Activated CD4-positive, alpha-beta T cell treated with anti-CD3 and anti-CD28 coated beads, Interleukin-2, amount 10 ng/mL, durations not matched to agents 24 days and 14 days (primary cell): ENCODE measurements at regions of chr5 and their contacts with region 1.

Region 1: DNA sequence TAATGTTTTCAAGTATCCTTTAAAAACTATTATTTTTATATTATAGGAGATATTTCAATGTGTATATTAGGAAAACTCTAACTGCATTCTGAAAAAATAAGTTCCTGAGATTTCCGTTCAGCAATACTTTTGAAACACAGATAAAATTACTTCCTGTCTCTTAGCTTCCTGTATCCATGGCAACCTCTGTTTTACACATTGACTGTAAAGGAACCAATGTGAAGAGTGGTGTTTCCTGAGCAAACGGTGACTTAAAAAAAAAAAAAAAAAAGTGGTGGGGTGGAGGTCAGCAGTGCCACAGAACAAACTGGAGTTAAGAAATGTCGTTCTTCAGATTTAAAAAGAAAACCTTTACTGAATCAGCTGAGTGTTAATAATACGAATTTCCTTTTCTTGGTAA is at the start of gene LRRC70:
- DNase-seq: peak; percentile 83
- H3K4me3 Mint-ChIP-seq: peak within 1 kb of the TSS; percentile 58
- H3K27ac Mint-ChIP-seq: peak within 1 kb of the TSS; percentile 56
- H3K4me1 Mint-ChIP-seq: peaks cover 21% of the 10 kb centered on the region
- H3K27me3 Mint-ChIP-seq: no peaks in the 10 kb centered on the region
- total RNA-seq, gene LRRC70: 0.73 and 2.0 TPM in 2 replicates

Region 2: GRCh38 chr5:62460578-62460983 is 118.0 kb before region 1 on chr5:
- intact Hi-C with region 1: loop called (anchors 10 kb)
- DNase-seq: no peak
- H3K4me3 Mint-ChIP-seq: no peak overlapping the region
- H3K27ac Mint-ChIP-seq: no peak overlapping the region
- H3K4me1 Mint-ChIP-seq: peaks cover under 1% of the 10 kb centered on the region
- H3K27me3 Mint-ChIP-seq: no peaks in the 10 kb centered on the region

Region 3: GRCh38 chr5:62562867-62563266 is 15.7 kb before region 1 on chr5:
- intact Hi-C with region 1: no loop called
- DNase-seq: no peak
- H3K4me3 Mint-ChIP-seq: no peak overlapping the region
- H3K27ac Mint-ChIP-seq: no peak overlapping the region
- H3K4me1 Mint-ChIP-seq: no peaks in the 10 kb centered on the region
- H3K27me3 Mint-ChIP-seq: no peaks in the 10 kb centered on the region

Region 4: GRCh38 chr5:62621280-62621679 is 42.7 kb after region 1 on chr5:
- intact Hi-C with region 1: no loop called
- DNase-seq: peak; percentile 40
- H3K4me3 Mint-ChIP-seq: no peak overlapping the region
- H3K27ac Mint-ChIP-seq: no peak overlapping the region
- H3K4me1 Mint-ChIP-seq: no peaks in the 10 kb centered on the region
- H3K27me3 Mint-ChIP-seq: no peaks in the 10 kb centered on the region